Transverse colon (tissue), 4 donors: ENCODE measurements at regions of chr20 and their contacts with region 1.

Region 1: GRCh38 chr20:20083807-20084206 is 31.5 kb downstream of the CFAP61 start:
- DNase-seq: no peak
- H3K4me3 ChIP-seq: peak overlapping the region in 1 of 4 donors; percentile 20
- H3K27ac ChIP-seq: no peak overlapping the region
- H3K4me1 ChIP-seq: peaks cover 0 to 6% (median 0%) of the 10 kb centered on the region in 4 donors
- H3K27me3 ChIP-seq: no peaks in the 10 kb centered on the region
- CTCF ChIP-seq: peak; percentile 40 to 50 (median 45)
- EP300 ChIP-seq: no peak
- POLR2A ChIP-seq: no peak

Region 2: DNA sequence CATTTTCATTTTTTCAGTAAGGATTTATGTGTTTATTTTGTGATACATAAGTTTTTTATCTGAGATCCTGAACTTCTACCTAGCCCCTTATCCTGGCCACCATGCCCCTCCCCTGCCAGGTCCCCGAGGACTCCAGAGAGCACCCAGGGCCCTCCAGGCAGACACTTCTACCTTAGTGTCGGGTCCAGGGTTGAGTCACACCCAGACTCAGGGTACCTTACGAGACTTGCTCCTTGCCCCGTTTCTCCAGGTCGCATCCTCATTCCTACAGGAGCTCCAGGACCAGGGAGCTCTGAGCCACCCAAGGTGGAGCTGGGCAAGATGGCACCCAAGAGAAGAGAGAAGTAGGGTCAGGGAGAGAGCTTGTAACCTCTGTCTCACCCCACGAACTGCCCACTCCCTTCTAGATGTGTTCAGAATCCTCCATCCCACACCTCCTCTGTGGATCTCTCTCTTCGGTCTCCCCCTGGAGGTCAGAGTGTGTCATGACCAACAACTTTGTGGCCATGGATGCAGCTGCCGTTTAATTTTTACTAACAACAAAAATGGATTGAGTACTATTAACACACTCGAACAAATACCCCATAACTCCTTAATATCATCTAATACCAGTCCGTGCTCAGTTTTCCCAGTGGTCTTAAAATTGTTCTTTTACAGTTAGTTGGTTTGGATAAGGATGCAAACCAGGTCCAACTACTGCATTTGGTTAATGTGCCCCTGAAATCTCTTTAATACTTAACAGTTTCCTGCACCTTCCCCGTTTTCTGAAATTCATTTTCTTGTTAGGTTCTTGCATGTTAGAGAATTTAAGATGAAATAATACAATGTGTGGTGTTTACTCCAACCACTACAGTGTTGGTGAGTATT is 153.5 kb after region 1 on chr20:
- in situ Hi-C with region 1: loop called in 3 of 4 experiments (anchors 10 to 25 kb)
- intact Hi-C with region 1: no loop called
- DNase-seq: peak; percentile 46
- H3K4me3 ChIP-seq: no peak overlapping the region
- H3K27ac ChIP-seq: no peak overlapping the region
- H3K4me1 ChIP-seq: no peaks in the 10 kb centered on the region
- H3K27me3 ChIP-seq: no peaks in the 10 kb centered on the region
- CTCF ChIP-seq: peak; percentile 57 to 79 (median 67)
- EP300 ChIP-seq: no peak
- POLR2A ChIP-seq: no peak

Region 3: GRCh38 chr20:20410678-20411077 is 326.9 kb after region 1 on chr20:
- in situ Hi-C with region 1: no loop called
- intact Hi-C with region 1: no loop called
- DNase-seq: peak; percentile 57
- H3K4me3 ChIP-seq: no peak overlapping the region
- H3K27ac ChIP-seq: no peak overlapping the region
- H3K4me1 ChIP-seq: no peaks in the 10 kb centered on the region
- H3K27me3 ChIP-seq: no peaks in the 10 kb centered on the region
- CTCF ChIP-seq: no peak
- EP300 ChIP-seq: no peak
- POLR2A ChIP-seq: no peak

Region 4: DNA sequence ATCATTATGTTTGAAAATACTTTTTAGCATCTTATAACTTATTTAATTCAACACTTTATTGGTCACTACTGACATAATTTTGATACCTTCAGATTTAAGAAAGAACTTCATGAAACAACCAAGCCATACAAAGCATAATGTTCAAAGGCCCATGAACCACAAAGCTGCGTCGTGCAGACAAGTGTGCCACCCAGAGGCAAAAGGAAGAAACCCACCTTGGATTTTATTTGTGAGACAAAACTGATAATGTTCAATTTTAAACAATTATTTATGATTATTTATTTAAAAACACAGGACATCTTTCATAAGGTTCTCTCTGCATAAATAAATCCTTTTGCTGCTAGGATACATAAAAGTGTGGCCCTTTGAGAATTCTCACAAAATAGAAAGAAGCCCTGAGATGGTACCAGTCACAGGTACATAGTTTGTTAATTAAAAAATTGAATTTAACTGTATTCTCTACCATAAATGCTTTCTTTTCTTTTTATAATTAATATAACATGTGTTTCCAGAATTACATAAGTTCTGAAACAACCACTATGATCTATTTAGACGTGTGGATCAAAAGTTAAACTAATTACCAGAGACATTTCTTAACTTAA is 484.9 kb after region 1 on chr20:
- in situ Hi-C with region 1: loop called in 1 of 4 experiments (anchors 25 kb)
- intact Hi-C with region 1: no loop called
- DNase-seq: no peak
- H3K4me3 ChIP-seq: no peak overlapping the region
- H3K27ac ChIP-seq: no peak overlapping the region
- H3K4me1 ChIP-seq: no peaks in the 10 kb centered on the region
- H3K27me3 ChIP-seq: no peaks in the 10 kb centered on the region
- CTCF ChIP-seq: peak; percentile 56 to 70 (median 60)
- EP300 ChIP-seq: no peak
- POLR2A ChIP-seq: no peak

Region 5: GRCh38 chr20:20593447-20594170 is 509.8 kb after region 1 on chr20:
- in situ Hi-C with region 1: loop called in 2 of 4 experiments (anchors 25 kb)
- intact Hi-C with region 1: no loop called
- DNase-seq: no peak
- H3K4me3 ChIP-seq: no peak overlapping the region
- H3K27ac ChIP-seq: no peak overlapping the region
- H3K4me1 ChIP-seq: peaks cover 0 to 6% (median 0%) of the 10 kb centered on the region in 4 donors
- H3K27me3 ChIP-seq: no peaks in the 10 kb centered on the region
- CTCF ChIP-seq: peak in 1 of 5 experiments; percentile 28
- EP300 ChIP-seq: no peak
- POLR2A ChIP-seq: no peak

Region 6: GRCh38 chr20:20824924-20825584 is 741.2 kb after region 1 on chr20:
- in situ Hi-C with region 1: loop called in 1 of 4 experiments (anchors 25 kb)
- intact Hi-C with region 1: loop called (anchors 10 kb)
- DNase-seq: peak; percentile 58
- H3K4me3 ChIP-seq: no peak overlapping the region
- H3K27ac ChIP-seq: no peak overlapping the region
- H3K4me1 ChIP-seq: peaks cover 0 to 4% (median 0%) of the 10 kb centered on the region in 4 donors
- H3K27me3 ChIP-seq: peaks cover 7% of the 10 kb centered on the region
- CTCF ChIP-seq: peak; percentile 75 to 77 (median 76)
- EP300 ChIP-seq: no peak
- POLR2A ChIP-seq: no peak